ENCODE measurements at regions of chr3 and their contacts with region 1.

Region 1: DNA sequence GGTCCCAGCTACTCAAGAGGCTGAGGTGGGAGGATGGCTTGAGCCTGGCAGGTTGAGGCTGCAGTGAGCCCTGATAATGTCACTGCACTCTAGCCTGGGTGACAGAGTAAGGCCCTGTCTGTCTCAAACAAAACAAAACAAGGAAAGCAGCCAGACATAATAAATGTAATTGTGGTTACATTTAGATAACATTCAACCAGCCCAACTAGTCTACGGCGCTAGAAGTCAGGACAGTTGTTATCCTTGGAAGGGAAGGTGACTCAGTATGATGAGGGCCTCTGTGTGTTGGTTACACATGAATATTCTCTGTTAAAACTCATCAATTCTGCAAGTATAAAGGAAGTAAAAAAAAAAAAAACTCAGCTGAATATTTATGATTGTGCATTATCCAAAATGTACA is 27.0 kb upstream of the CSPG5 start:
- DNase-seq: no peak

Region 2: GRCh38 chr3:47019201-47019600 is 586.5 kb before region 1 on chr3:
- intact Hi-C with region 1: no loop called
- DNase-seq: no peak

Region 3: GRCh38 chr3:47634996-47635395 is 29.3 kb after region 1 on chr3:
- intact Hi-C with region 1: loop called in 1 of 2 experiments (anchors 1 kb)
- DNase-seq: no peak

Region 4: GRCh38 chr3:47772788-47773187 is 167.1 kb after region 1 on chr3:
- intact Hi-C with region 1: no loop called
- DNase-seq: no peak